Caco-2 (cell line): ENCODE measurements at regions of chr3 and their contacts with region 1.

Region 1: GRCh38 chr3:196942226-196942914 is at the start of gene NCBP2:
- DNase-seq: peak; percentile 99
- H3K4me3 ChIP-seq: peak within 1 kb of the TSS; percentile 82
- H3K4me3 Mint-ChIP-seq: peak within 1 kb of the TSS; percentile 90
- H3K27ac Mint-ChIP-seq: peak within 1 kb of the TSS; percentile 92
- H3K4me1 ChIP-seq: peaks cover 18% of the 10 kb centered on the region; the same call in 1 of the 2 replicates
- H3K4me1 Mint-ChIP-seq: no peaks in the 10 kb centered on the region
- H3K27me3 ChIP-seq: no peaks in the 10 kb centered on the region
- H3K27me3 Mint-ChIP-seq: peaks cover 3% of the 10 kb centered on the region
- CTCF ChIP-seq: peak; percentile 50 to 78
- total RNA-seq, gene NCBP2: 66.8 and 70.7 TPM in 2 replicates

Region 2: GRCh38 chr3:196793235-196793641 is 149.1 kb before region 1 on chr3:
- CTCF ChIA-PET with region 1: no interaction called
- POLR2A ChIA-PET with region 1: interaction called, 3 read pairs
- intact Hi-C with region 1: loop called (anchors 2 kb)
- DNase-seq: peak; percentile 78 to 82
- H3K4me3 ChIP-seq: no peak overlapping the region
- H3K4me3 Mint-ChIP-seq: peak overlapping the region; percentile 49
- H3K27ac Mint-ChIP-seq: peak overlapping the region; percentile 80
- H3K4me1 ChIP-seq: peaks cover 67% of the 10 kb centered on the region
- H3K4me1 Mint-ChIP-seq: peaks cover 37% of the 10 kb centered on the region
- H3K27me3 ChIP-seq: no peaks in the 10 kb centered on the region
- H3K27me3 Mint-ChIP-seq: no peaks in the 10 kb centered on the region
- CTCF ChIP-seq: no peak

Region 3: GRCh38 chr3:196867507-196868296 is 74.7 kb before region 1 on chr3 and contains the start of gene SENP5:
- CTCF ChIA-PET with region 1: interaction called, 7 read pairs
- POLR2A ChIA-PET with region 1: interaction called, 12 read pairs
- intact Hi-C with region 1: loop called (anchors 5 kb)
- DNase-seq: peak; percentile 87 to 92
- H3K4me3 ChIP-seq: peak within 1 kb of the TSS; percentile 99
- H3K4me3 Mint-ChIP-seq: peak within 1 kb of the TSS; percentile 90
- H3K27ac Mint-ChIP-seq: peak within 1 kb of the TSS; percentile 91
- H3K4me1 ChIP-seq: no peaks in the 10 kb centered on the region
- H3K4me1 Mint-ChIP-seq: no peaks in the 10 kb centered on the region
- H3K27me3 ChIP-seq: no peaks in the 10 kb centered on the region
- H3K27me3 Mint-ChIP-seq: no peaks in the 10 kb centered on the region
- CTCF ChIP-seq: no peak
- total RNA-seq, gene SENP5: 33.6 and 36.8 TPM in 2 replicates

Region 4: DNA sequence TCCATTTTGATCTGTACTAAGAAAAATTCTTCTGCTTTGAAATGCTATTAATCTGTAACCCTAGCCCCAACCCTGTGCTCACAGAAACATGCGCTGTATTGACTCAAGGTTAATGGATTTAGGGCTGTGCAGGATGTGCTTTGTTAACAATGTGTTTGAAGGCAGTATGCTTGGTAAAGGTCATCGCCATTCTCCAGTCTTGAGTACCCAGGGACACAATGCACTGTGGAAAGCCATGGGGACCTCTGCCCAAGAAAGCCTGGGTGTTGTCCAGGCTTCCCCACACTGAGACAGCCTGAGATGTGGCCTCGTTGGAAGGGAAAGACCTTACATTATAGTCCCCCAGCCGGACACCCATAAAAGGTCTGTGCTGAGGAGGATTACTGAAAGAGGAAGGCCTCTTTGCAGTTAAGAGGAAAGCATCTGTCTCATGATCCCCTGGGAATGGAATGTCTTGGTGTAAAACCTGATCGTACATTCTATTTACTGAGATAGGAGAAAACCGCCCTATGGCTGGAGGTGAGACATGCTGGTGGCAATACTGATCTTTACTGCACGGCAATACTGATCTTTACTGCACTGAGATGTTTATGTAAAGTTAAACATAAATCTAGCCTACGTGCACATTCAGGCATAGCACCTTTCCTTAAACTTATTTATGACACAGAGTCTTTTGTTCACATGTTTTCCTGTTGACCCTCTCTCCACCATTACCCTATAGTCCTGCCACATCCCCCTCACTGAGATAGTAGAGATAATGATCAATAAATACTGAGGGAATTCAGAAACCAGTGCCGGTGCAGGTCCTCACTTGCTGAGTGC is 19.9 kb after region 1 on chr3:
- CTCF ChIA-PET with region 1: no interaction called
- POLR2A ChIA-PET with region 1: no interaction called
- intact Hi-C with region 1: loop called (anchors 2 kb)
- DNase-seq: peak; percentile 69 to 76
- H3K4me3 ChIP-seq: no peak overlapping the region
- H3K4me3 Mint-ChIP-seq: peak overlapping the region; percentile 59
- H3K27ac Mint-ChIP-seq: peak overlapping the region; percentile 82
- H3K4me1 ChIP-seq: peaks cover 26% of the 10 kb centered on the region
- H3K4me1 Mint-ChIP-seq: peaks cover 34% of the 10 kb centered on the region
- H3K27me3 ChIP-seq: no peaks in the 10 kb centered on the region
- H3K27me3 Mint-ChIP-seq: no peaks in the 10 kb centered on the region
- CTCF ChIP-seq: no peak

Region 5: DNA sequence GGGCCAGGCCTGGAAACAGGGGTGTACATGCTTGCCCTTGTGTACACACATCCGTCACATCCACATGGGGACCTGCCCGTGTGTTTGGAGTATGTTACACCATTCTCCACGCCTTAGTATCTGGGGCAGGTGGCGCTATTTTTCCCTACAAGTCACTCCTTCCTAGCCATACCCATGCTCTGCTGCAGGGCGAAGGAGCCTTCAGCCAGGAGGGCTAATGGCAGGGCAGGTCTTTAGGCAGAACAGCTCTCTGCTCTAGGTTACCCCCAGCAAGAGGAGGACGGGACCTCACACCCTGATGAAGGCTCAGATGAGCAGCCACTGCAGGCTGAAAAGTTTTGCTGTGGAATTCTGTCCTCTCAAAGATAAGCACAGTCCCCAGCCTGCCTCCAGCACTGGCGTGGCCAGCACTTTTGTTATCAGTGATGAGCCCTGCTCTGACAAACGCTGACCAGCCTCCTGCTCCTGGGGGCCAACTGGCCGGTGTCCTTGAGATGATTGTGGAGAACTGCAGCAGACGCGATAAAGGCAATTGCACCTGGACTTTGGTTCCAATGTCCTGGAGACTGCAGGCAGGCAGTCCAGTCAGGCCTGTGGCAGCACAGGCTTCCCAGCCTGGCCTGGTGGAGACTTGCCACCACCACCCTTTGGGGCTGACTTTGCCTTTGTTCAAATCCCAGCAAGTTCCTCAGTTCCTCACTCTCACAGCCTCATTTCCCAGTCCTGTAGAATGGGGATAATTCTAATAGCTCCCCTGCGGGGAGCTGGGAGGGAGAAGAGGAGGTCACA is 46.1 kb after region 1 on chr3:
- CTCF ChIA-PET with region 1: no interaction called
- POLR2A ChIA-PET with region 1: no interaction called
- intact Hi-C with region 1: no loop called
- DNase-seq: peak; percentile 69 to 87
- H3K4me3 ChIP-seq: no peak overlapping the region
- H3K4me3 Mint-ChIP-seq: no peak overlapping the region
- H3K27ac Mint-ChIP-seq: peak overlapping the region; percentile 68
- H3K4me1 ChIP-seq: peaks cover 38% of the 10 kb centered on the region
- H3K4me1 Mint-ChIP-seq: peaks cover 15% of the 10 kb centered on the region
- H3K27me3 ChIP-seq: no peaks in the 10 kb centered on the region
- H3K27me3 Mint-ChIP-seq: no peaks in the 10 kb centered on the region
- CTCF ChIP-seq: peak in 1 of 2 experiments; percentile 48